WTC11 (cell line): ENCODE measurements at regions of chr15 and their contacts with region 1.

Region 1: GRCh38 chr15:74134387-74135027 is 4.1 kb downstream of the ISLR2 start:
- DNase-seq: peak; percentile 84
- ATAC-seq: peak; percentile 43
- H3K4me3 Mint-ChIP-seq: peak overlapping the region; percentile 67
- H3K27ac Mint-ChIP-seq: no peak overlapping the region
- H3K4me1 Mint-ChIP-seq: peaks cover 65% of the 10 kb centered on the region
- H3K27me3 Mint-ChIP-seq: peaks cover 98% of the 10 kb centered on the region
- CTCF ChIP-seq: peak; percentile 62

Region 2: DNA sequence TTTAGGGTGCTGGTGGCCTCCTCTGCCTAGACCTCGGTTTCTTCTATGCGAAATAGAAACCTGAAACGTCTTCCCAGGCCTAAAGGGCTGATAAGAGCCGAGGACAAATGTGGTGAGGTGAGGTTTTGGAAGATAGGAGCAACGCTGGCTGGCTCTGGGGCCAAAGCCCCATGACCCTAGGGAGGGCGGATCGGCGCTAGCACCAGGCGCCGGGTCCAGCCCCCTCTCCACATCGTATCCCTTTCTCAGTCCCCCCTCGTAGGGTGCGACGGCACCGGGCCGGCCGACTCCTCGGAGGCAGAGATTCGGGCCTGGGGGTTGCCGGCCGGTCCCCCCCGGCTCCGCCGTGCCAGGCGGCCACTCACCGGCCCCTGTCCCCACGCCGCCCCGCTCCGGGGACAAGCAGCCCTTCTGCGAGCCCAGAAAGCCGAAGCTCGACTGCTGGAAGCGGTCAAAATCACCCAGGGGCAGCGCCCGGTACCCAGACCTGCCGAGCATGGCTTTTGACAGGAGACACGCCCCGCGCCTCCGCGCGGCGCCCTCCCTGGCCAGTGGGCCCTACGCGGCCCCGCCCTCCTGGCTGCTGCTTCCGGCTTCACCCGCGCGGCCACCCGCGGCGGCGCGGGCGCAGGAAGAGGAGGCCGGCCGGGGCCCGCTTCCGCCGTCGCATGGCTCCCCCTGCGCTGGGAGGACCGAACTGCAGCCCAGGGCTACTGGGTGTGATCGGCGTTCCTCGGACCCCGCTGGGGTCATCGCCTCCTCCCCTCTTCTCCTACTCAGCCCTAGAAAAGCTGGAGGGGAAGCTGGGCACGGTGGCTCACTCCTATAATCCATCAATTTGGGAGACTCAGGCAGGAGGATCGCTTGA is 142.5 kb before region 1 on chr15 and contains the start of gene STOML1:
- CTCF ChIA-PET with region 1: no interaction called
- POLR2A ChIA-PET with region 1: interaction called, 10 read pairs
- DNase-seq: peak; percentile 97
- ATAC-seq: peak; percentile 68
- H3K4me3 Mint-ChIP-seq: peak within 1 kb of the TSS; percentile 74
- H3K27ac Mint-ChIP-seq: no peak within 1 kb of the TSS
- H3K4me1 Mint-ChIP-seq: peaks cover 30% of the 10 kb centered on the region
- H3K27me3 Mint-ChIP-seq: peaks cover 13% of the 10 kb centered on the region
- CTCF ChIP-seq: peak; percentile 81
- total RNA-seq, gene STOML1: 5.0 to 5.5 TPM (median 5.4 TPM) in 3 replicates